Activated T-helper 2 cell treated with anti-CD3 and anti-CD28 coated beads, Interferon-gamma antibody, Interleukin-2, Interleukin-4, amounts not matched to agents 10 μg/mL and 5 μg/mL and 100 μg/mL, durations not matched to agents 14 hours and 24 hours and 36 hours (primary cell): ENCODE measurements at regions of chr3 and their contacts with region 1.

Region 1: GRCh38 chr3:57826245-57826951 is 70.3 kb downstream of the SLMAP start:
- DNase-seq: no peak
- H3K4me3 Mint-ChIP-seq: no peak overlapping the region
- H3K27ac Mint-ChIP-seq: no peak overlapping the region
- H3K4me1 Mint-ChIP-seq: peaks cover 12% of the 10 kb centered on the region
- H3K27me3 Mint-ChIP-seq: no peaks in the 10 kb centered on the region

Region 2: GRCh38 chr3:57793737-57794187 is 32.6 kb before region 1 on chr3:
- intact Hi-C with region 1: loop called (anchors 5 kb)
- DNase-seq: no peak
- H3K4me3 Mint-ChIP-seq: no peak overlapping the region
- H3K27ac Mint-ChIP-seq: peak overlapping the region; percentile 44
- H3K4me1 Mint-ChIP-seq: peaks cover 28% of the 10 kb centered on the region
- H3K27me3 Mint-ChIP-seq: no peaks in the 10 kb centered on the region